Pancreas (tissue), 10 donors: ENCODE measurements at regions of chr2 and their contacts with region 1.

Region 1: GRCh38 chr2:189477756-189478155 is 36.5 kb downstream of the WDR75 start:
- DNase-seq: no peak
- ATAC-seq: no peak
- H3K4me3 ChIP-seq: no peak overlapping the region
- H3K27ac ChIP-seq: no peak overlapping the region
- H3K4me1 ChIP-seq: no peaks in the 10 kb centered on the region
- H3K27me3 ChIP-seq: no peaks in the 10 kb centered on the region
- CTCF ChIP-seq: no peak

Region 2: GRCh38 chr2:189569295-189569910 is 91.6 kb after region 1 on chr2:
- intact Hi-C with region 1: loop called in 1 of 3 experiments (anchors 10 kb)
- DNase-seq: no peak
- ATAC-seq: peak in 3 of 4 donors; percentile 48 to 62 (median 55)
- H3K4me3 ChIP-seq: no peak overlapping the region
- H3K27ac ChIP-seq: peak overlapping the region in 2 of 4 donors; percentile 3 to 45
- H3K4me1 ChIP-seq: peaks cover 5 to 19% (median 7%) of the 10 kb centered on the region in 3 donors
- H3K27me3 ChIP-seq: no peaks in the 10 kb centered on the region
- CTCF ChIP-seq: no peak